GM12878 (cell line): ENCODE measurements at regions of chr6 and their contacts with region 1.

Region 1: DNA sequence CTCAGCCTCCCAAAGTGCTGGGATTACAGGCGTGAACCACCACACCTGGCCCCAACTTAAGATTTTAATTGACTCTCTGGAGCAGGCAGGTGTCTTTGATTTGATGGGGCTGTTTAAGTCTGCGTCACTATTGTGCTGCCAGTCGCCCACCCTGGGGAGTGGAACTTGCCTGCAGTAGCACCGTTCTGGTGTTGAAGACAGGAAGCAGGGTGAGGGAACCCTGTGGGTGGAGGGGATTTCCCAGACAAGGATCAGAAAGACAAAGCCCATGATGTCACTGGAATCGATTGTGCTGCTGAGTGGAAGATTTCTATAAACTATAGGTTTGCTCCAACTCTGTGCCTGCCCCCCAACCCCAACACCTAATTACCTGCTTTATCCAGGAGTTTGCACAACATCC is 11.0 kb downstream of the ALDH8A1 start:
- DNase-seq: peak; percentile 13
- ATAC-seq: peak; percentile 85
- H3K4me3 ChIP-seq: no peak overlapping the region
- H3K27ac ChIP-seq: no peak overlapping the region
- H3K4me1 ChIP-seq: peaks cover 6% of the 10 kb centered on the region; the same call in 1 of the 2 replicates
- H3K27me3 ChIP-seq: no peaks in the 10 kb centered on the region
- CTCF ChIP-seq: no peak
- EP300 ChIP-seq: no peak
- POLR2A ChIP-seq: no peak
- RAD21 ChIP-seq: no peak

Region 2: DNA sequence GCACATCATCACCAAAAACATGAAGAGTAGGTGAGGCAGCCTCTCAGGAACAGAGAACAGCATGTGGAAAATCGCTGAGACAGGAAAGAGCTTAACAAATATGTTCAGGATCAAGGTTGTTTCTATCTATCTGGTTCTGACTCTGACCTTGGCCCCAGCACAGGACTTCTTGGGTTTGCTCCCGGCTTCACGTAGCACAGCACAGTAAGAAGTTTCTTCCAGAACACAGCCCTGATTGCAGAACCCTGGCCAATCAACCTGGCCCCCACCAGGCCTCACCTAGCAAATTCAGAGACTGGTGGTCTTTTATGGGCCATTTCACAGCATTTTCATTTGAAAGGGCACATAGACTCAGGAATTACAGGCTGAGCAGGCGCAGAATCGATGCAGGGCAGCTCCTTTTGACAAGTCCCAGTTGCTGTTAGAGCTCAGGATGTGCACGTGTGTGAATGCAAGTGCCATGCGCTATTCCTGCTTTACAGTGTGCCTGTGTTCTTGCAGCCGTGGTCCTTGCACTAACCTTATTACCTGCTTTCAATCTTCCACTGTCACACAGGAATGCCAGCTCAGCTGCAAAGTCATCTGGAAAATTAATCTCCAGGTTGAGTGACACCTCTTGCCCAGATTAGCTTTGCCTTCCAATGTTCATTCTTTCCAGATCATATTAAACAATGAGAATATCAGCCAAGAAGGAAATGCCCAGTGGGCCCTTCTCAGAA is 786.0 kb before region 1 on chr6:
- CTCF ChIA-PET with region 1: interaction called, 44 read pairs
- POLR2A ChIA-PET with region 1: no interaction called
- RAD21 ChIA-PET with region 1: interaction called, 16 read pairs
- SMC1A ChIA-PET with region 1: interaction called, 20 read pairs
- in situ Hi-C with region 1: no loop called
- intact Hi-C with region 1: loop called (anchors 2 kb)
- DNase-seq: no peak
- ATAC-seq: no peak
- H3K4me3 ChIP-seq: no peak overlapping the region
- H3K27ac ChIP-seq: no peak overlapping the region
- H3K4me1 ChIP-seq: no peaks in the 10 kb centered on the region
- H3K27me3 ChIP-seq: peaks cover 1 to 3% of the 10 kb centered on the region in 2 experiments; a peak in 2 of 4 replicates
- CTCF ChIP-seq: no peak
- EP300 ChIP-seq: no peak
- POLR2A ChIP-seq: no peak
- RAD21 ChIP-seq: no peak

Region 3: GRCh38 chr6:134174672-134175198 is 764.2 kb before region 1 on chr6:
- CTCF ChIA-PET with region 1: interaction called, 24 read pairs
- POLR2A ChIA-PET with region 1: interaction called, 3 read pairs
- RAD21 ChIA-PET with region 1: interaction called, 13 read pairs
- SMC1A ChIA-PET with region 1: interaction called, 23 read pairs
- in situ Hi-C with region 1: loop called (anchors 5 kb)
- intact Hi-C with region 1: loop called (anchors 1 kb)
- DNase-seq: peak; percentile 50
- ATAC-seq: peak; percentile 96
- H3K4me3 ChIP-seq: peak overlapping the region; percentile 82
- H3K27ac ChIP-seq: no peak overlapping the region
- H3K4me1 ChIP-seq: peaks cover 5% of the 10 kb centered on the region
- H3K27me3 ChIP-seq: peaks cover 2 to 9% of the 10 kb centered on the region in 2 experiments
- CTCF ChIP-seq: peak in 1 of 3 experiments; percentile 34; a peak in 3 of 6 replicates
- EP300 ChIP-seq: no peak
- POLR2A ChIP-seq: peak; percentile 99
- RAD21 ChIP-seq: peak; percentile 38; the same call in 1 of the 2 replicates

Region 4: DNA sequence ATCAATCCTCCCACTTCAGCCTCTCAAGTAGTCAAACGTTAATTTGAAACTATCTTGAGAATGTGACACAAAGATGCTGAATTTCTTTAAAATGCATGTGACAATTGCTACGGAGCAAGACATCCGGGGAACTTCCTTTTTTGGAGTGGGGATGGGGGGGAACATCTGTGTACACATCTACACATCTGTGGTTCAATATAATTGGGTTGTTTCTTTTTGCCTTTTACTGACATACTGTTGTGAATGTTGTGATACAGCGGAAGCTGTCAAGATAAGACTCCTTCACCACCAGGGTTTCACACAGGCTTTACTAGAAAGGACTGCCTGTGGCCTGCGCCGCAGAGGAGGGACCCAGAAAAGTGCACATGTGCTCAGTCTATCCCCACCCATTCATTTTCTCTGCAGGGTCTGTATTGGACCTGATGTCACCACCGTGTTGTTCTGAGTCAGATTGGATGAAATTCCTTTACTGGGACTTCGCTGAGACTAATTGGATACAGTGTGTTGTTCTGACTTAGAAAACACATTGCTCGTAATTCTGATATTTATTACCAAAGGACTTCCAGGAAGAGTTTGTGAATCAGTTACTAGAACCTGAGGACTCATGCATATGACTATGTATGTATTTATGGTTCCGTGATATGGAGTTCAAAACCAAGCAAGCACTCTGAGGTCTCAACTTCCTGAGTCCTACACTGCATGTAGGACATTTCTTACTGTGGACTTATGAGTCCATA is 522.3 kb before region 1 on chr6:
- CTCF ChIA-PET with region 1: no interaction called
- POLR2A ChIA-PET with region 1: no interaction called
- RAD21 ChIA-PET with region 1: no interaction called
- SMC1A ChIA-PET with region 1: no interaction called
- in situ Hi-C with region 1: no loop called
- intact Hi-C with region 1: no loop called
- DNase-seq: no peak
- ATAC-seq: no peak
- H3K4me3 ChIP-seq: no peak overlapping the region
- H3K27ac ChIP-seq: no peak overlapping the region
- H3K4me1 ChIP-seq: no peaks in the 10 kb centered on the region
- H3K27me3 ChIP-seq: peaks cover 0 to 3% of the 10 kb centered on the region in 2 experiments; a peak in 2 of 4 replicates
- CTCF ChIP-seq: no peak
- EP300 ChIP-seq: no peak
- POLR2A ChIP-seq: no peak
- RAD21 ChIP-seq: no peak

Region 5: GRCh38 chr6:134882426-134883038 is 56.4 kb before region 1 on chr6:
- CTCF ChIA-PET with region 1: interaction called, 17 read pairs
- POLR2A ChIA-PET with region 1: no interaction called
- RAD21 ChIA-PET with region 1: no interaction called
- SMC1A ChIA-PET with region 1: interaction called, 8 read pairs
- in situ Hi-C with region 1: no loop called
- intact Hi-C with region 1: no loop called
- DNase-seq: no peak
- ATAC-seq: peak; percentile 44; the same call in 2 of the 3 replicates
- H3K4me3 ChIP-seq: no peak overlapping the region
- H3K27ac ChIP-seq: no peak overlapping the region
- H3K4me1 ChIP-seq: no peaks in the 10 kb centered on the region
- H3K27me3 ChIP-seq: 0 out of 4 replicates have a peak, but pooled peaks cover 0 to 1% of the 10 kb centered on the region in 2 experiments
- CTCF ChIP-seq: peak; percentile 71 to 80 (median 76)
- EP300 ChIP-seq: no peak
- POLR2A ChIP-seq: no peak
- RAD21 ChIP-seq: peak; percentile 96

Region 6: GRCh38 chr6:134925800-134926199 is 13.1 kb before region 1 on chr6:
- CTCF ChIA-PET with region 1: interaction called, 22 read pairs
- POLR2A ChIA-PET with region 1: no interaction called
- RAD21 ChIA-PET with region 1: no interaction called
- SMC1A ChIA-PET with region 1: interaction called, 5 read pairs
- in situ Hi-C with region 1: no loop called
- intact Hi-C with region 1: no loop called
- DNase-seq: no peak
- ATAC-seq: no peak
- H3K4me3 ChIP-seq: no peak overlapping the region
- H3K27ac ChIP-seq: no peak overlapping the region
- H3K4me1 ChIP-seq: no peaks in the 10 kb centered on the region
- H3K27me3 ChIP-seq: no peaks in the 10 kb centered on the region
- CTCF ChIP-seq: no peak
- EP300 ChIP-seq: no peak
- POLR2A ChIP-seq: no peak
- RAD21 ChIP-seq: no peak

Region 7: DNA sequence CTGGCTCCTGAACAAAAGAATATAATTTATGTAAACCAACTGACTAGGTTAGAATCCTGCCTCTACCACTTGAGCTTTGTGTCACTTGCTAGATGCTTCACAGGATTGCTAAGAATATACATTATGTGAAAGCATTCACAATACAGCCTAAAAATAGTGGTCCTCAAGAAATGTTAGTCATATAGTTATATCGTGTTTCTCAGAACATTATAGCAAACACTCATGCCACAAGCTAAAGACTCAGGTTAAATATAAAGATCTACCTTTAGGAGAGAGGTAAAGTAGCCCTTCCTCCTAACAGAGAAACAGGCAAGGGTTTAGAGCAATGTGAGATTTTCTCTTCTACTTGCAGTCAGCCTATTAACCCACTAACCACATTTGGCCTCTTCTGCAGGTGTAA is 28.8 kb after region 1 on chr6:
- CTCF ChIA-PET with region 1: interaction called, 16 read pairs
- POLR2A ChIA-PET with region 1: no interaction called
- RAD21 ChIA-PET with region 1: no interaction called
- SMC1A ChIA-PET with region 1: interaction called, 4 read pairs
- in situ Hi-C with region 1: no loop called
- intact Hi-C with region 1: no loop called
- DNase-seq: no peak
- ATAC-seq: peak; percentile 23; the same call in 1 of the 3 replicates
- H3K4me3 ChIP-seq: no peak overlapping the region
- H3K27ac ChIP-seq: no peak overlapping the region
- H3K4me1 ChIP-seq: no peaks in the 10 kb centered on the region
- H3K27me3 ChIP-seq: no peaks in the 10 kb centered on the region
- CTCF ChIP-seq: no peak
- EP300 ChIP-seq: no peak
- POLR2A ChIP-seq: no peak
- RAD21 ChIP-seq: no peak

Region 8: GRCh38 chr6:135183532-135184440 is 244.9 kb after region 1 on chr6:
- CTCF ChIA-PET with region 1: interaction called, 22 read pairs
- POLR2A ChIA-PET with region 1: no interaction called
- RAD21 ChIA-PET with region 1: interaction called, 6 read pairs
- SMC1A ChIA-PET with region 1: no interaction called
- in situ Hi-C with region 1: no loop called
- intact Hi-C with region 1: no loop called
- DNase-seq: no peak
- ATAC-seq: peak; percentile 62
- H3K4me3 ChIP-seq: peak overlapping the region; percentile 89
- H3K27ac ChIP-seq: peak overlapping the region; percentile 99
- H3K4me1 ChIP-seq: peaks cover 16% of the 10 kb centered on the region
- H3K27me3 ChIP-seq: no peaks in the 10 kb centered on the region
- CTCF ChIP-seq: peak; percentile 71 to 91 (median 79); a peak in 5 of 6 replicates
- EP300 ChIP-seq: no peak; a peak in 1 of 4 replicates
- POLR2A ChIP-seq: peak; percentile 12
- RAD21 ChIP-seq: peak; percentile 90